Cardiac septum (tissue), 1 donor: ENCODE measurements at regions of chr4 and their contacts with region 1.

Region 1: GRCh38 chr4:100738196-100739170 is 220.7 kb upstream of the EMCN start:
- DNase-seq: peak; percentile 72

Region 2: GRCh38 chr4:100093091-100093866 is 645.2 kb before region 1 on chr4:
- intact Hi-C with region 1: loop called (anchors 5 kb)
- DNase-seq: peak; percentile 77

Region 3: GRCh38 chr4:100421361-100421978 is 317.0 kb before region 1 on chr4:
- intact Hi-C with region 1: loop called (anchors 5 kb)
- DNase-seq: no peak

Region 4: GRCh38 chr4:100517864-100518341 is 220.6 kb before region 1 on chr4 and contains the start of gene EMCN:
- intact Hi-C with region 1: loop called (anchors 2 kb)
- DNase-seq: no peak
- total RNA-seq, gene EMCN: 27.5 TPM

Region 5: GRCh38 chr4:100591161-100591876 is 147.2 kb before region 1 on chr4:
- intact Hi-C with region 1: loop called (anchors 2 kb)
- DNase-seq: no peak

Region 6: GRCh38 chr4:100651499-100652175 is 86.8 kb before region 1 on chr4:
- intact Hi-C with region 1: loop called (anchors 2 kb)
- DNase-seq: no peak